ENCODE measurements at regions of chr5 and their contacts with region 1.

Region 1: DNA sequence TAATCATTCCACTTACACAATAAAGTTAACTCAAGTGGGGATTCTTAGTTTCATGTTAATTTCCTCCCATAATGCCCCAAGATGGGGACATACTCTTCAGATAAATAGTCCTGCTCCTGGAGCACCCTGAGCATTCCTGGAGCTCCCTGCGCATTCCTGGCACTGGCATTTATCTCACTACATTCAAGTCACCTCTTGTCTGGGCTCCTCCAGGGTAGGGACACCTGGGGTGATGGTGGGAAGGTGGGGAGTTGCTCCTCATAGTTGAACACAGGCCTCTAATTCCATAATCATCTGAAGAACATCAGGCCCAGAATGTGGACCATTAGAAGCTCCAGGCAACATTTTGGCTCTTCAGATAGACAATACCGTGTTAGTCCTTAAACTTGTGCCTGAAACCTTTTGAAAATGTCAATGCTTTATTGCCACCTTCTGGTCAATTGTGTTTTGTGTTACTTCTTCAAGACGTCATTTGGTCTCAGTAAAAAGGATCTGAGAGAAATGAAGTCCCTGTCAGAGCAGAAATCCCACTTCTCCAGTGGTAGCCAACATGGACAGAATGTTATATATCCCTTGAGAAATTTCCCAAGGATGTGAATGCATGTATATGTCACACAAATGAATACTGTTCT is 14.2 kb upstream of the AGGF1 start:
- DNase-seq: no peak
- H3K4me3 ChIP-seq: no peak overlapping the region
- H3K27ac ChIP-seq: no peak overlapping the region
- H3K4me1 ChIP-seq: no peaks in the 10 kb centered on the region
- H3K27me3 ChIP-seq: no peaks in the 10 kb centered on the region
- CTCF ChIP-seq: no peak

Region 2: GRCh38 chr5:76867827-76868693 is 148.0 kb before region 1 on chr5:
- intact Hi-C with region 1: loop called (anchors 5 kb)
- DNase-seq: peak; percentile 69
- H3K4me3 ChIP-seq: no peak overlapping the region
- H3K27ac ChIP-seq: no peak overlapping the region
- H3K4me1 ChIP-seq: no peaks in the 10 kb centered on the region
- H3K27me3 ChIP-seq: no peaks in the 10 kb centered on the region
- CTCF ChIP-seq: peak; percentile 80

Region 3: GRCh38 chr5:76926329-76927105 is 89.5 kb before region 1 on chr5:
- intact Hi-C with region 1: no loop called
- DNase-seq: no peak
- H3K4me3 ChIP-seq: no peak overlapping the region
- H3K27ac ChIP-seq: no peak overlapping the region
- H3K4me1 ChIP-seq: no peaks in the 10 kb centered on the region
- H3K27me3 ChIP-seq: no peaks in the 10 kb centered on the region
- CTCF ChIP-seq: no peak

Region 4: GRCh38 chr5:77337686-77338085 is 321.6 kb after region 1 on chr5:
- intact Hi-C with region 1: no loop called
- DNase-seq: no peak
- H3K4me3 ChIP-seq: no peak overlapping the region
- H3K27ac ChIP-seq: no peak overlapping the region
- H3K4me1 ChIP-seq: no peaks in the 10 kb centered on the region
- H3K27me3 ChIP-seq: no peaks in the 10 kb centered on the region
- CTCF ChIP-seq: no peak